Sigmoid colon (tissue), 7 donors: ENCODE measurements at regions of chr16 and their contacts with region 1.

Region 1: DNA sequence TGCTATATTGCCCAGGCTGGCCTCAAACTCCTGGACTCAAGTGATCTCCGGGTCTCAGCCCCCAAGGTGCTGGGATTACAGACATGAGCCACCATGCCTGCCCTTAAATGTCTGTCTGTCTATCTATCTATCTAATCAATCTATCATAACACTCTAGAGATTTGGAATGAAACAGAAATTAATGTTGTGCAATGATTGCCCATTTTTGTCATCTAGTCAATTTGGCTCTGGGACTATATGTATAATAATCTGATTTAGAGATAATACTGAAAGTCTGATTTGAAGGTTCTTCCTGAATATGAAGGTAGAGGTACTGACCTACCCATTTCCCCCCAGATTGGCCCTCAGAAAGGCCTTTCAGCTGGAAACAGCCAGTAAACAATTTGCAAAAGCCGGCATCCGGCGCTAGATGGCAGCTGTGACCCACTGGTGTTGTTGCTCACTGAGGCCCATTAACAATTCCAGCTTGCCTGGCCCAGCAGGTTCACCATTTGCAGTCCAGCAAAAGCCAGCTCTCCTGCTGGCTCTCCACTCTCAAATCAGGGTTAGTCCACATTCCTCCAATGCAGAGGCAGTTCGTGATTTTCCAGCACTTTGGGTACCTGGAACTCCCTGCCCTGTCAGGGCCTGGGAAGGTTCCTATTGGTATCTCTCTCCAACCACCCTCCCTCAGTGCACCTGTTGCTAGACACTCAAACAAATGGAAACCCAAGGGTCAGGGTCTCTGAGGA is 22.9 kb upstream of the C16orf87 start:
- DNase-seq: peak; percentile 83
- H3K4me3 ChIP-seq: no peak overlapping the region
- H3K27ac ChIP-seq: no peak overlapping the region
- H3K4me1 ChIP-seq: peaks cover 0 to 11% (median 11%) of the 10 kb centered on the region in 4 donors
- H3K27me3 ChIP-seq: no peaks in the 10 kb centered on the region
- CTCF ChIP-seq: peak; percentile 24 to 82 (median 64)
- EP300 ChIP-seq: no peak
- POLR2A ChIP-seq: no peak

Region 2: DNA sequence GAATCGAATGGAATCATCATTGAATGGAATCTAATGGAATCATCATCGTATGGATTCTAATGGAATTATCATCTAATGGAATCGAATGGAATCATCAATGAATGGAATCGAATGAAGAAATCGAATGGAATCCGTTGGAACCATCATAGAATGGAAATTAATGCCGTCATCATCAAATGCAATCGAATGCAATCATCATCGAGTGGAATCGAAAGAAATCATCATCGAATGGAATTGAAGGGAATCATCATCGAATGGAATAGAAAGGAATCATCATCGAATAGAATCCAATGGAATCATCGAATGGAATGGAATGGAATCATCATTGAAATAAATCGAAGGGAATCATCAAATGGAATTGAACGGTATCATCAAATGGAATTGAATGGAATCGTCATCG is 449.8 kb before region 1 on chr16:
- intact Hi-C with region 1: no loop called
- DNase-seq: no peak
- H3K4me3 ChIP-seq: no peak overlapping the region
- H3K27ac ChIP-seq: no peak overlapping the region
- H3K4me1 ChIP-seq: no peaks in the 10 kb centered on the region
- H3K27me3 ChIP-seq: no peaks in the 10 kb centered on the region
- CTCF ChIP-seq: no peak
- EP300 ChIP-seq: no peak
- POLR2A ChIP-seq: no peak

Region 3: GRCh38 chr16:46883690-46884512 is 30.0 kb after region 1 on chr16 and contains the start of gene GPT2:
- intact Hi-C with region 1: loop called (anchors 2 kb)
- DNase-seq: peak; percentile 97
- H3K4me3 ChIP-seq: peak within 1 kb of the TSS; percentile 54 to 87 (median 72)
- H3K27ac ChIP-seq: peak within 1 kb of the TSS; percentile 68 to 75 (median 70)
- H3K4me1 ChIP-seq: peaks cover 0 to 19% (median 15%) of the 10 kb centered on the region in 4 donors
- H3K27me3 ChIP-seq: peaks cover 0 to 12% (median 0%) of the 10 kb centered on the region in 3 donors
- CTCF ChIP-seq: no peak
- EP300 ChIP-seq: no peak
- POLR2A ChIP-seq: peak in 1 of 2 donors; percentile 14
- total RNA-seq, gene GPT2: 3.3 to 17.1 (median 10.7) TPM

Region 4: DNA sequence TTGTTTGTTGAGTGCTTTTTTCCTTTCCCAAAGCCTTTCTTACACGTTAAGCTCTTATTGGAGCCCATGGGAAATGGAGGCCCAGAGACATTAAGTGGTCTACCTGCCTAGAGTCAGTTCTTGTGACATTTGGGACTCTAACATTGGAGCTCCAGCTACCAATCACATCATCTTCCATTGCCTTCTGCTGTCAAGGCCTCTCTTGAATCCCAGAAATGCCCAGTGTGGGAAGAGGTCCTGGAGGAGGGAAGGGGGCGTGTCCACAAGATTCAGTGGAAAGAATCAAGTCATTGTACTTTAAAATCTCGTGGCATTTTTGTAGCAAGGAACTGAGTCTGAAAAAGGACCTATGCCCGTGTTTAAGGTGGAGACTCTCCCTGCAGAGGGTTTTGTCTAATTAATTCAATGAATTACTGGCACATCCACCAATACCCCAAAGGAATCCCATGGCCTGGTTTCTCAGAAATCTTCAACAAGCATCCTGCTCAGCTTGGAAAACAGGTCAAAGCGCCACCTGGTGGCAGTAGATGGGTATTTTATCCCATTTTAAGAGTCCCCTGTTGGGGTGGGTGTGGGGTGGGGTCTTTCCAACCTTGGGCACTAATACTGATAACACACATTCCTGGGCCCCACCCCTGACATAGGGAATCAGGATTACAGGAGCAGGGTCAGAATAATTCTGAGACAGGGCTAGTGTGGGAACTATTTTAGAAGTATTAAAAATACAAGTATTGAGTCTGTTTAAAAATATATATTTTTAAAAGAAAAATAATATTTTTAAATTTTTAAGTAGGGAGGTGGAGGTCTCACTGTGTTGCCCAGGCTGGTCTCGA is 54.9 kb after region 1 on chr16:
- intact Hi-C with region 1: loop called (anchors 1 kb)
- DNase-seq: no peak
- H3K4me3 ChIP-seq: no peak overlapping the region
- H3K27ac ChIP-seq: no peak overlapping the region
- H3K4me1 ChIP-seq: peaks cover 0 to 5% (median 0%) of the 10 kb centered on the region in 4 donors
- H3K27me3 ChIP-seq: no peaks in the 10 kb centered on the region
- CTCF ChIP-seq: peak in 3 of 4 experiments; percentile 69 to 85 (median 74)
- EP300 ChIP-seq: no peak
- POLR2A ChIP-seq: no peak

Region 5: GRCh38 chr16:46973207-46973995 is 119.5 kb after region 1 on chr16 and contains the start of gene DNAJA2:
- intact Hi-C with region 1: no loop called
- DNase-seq: peak; percentile 96
- H3K4me3 ChIP-seq: peak within 1 kb of the TSS; percentile 80 to 95 (median 90)
- H3K27ac ChIP-seq: peak within 1 kb of the TSS; percentile 95 to 99 (median 97)
- H3K4me1 ChIP-seq: peaks cover 0 to 40% (median 32%) of the 10 kb centered on the region in 4 donors
- H3K27me3 ChIP-seq: no peaks in the 10 kb centered on the region
- CTCF ChIP-seq: no peak
- EP300 ChIP-seq: peak in 1 of 4 donors; percentile 26
- POLR2A ChIP-seq: peak; percentile 85 to 86
- total RNA-seq, gene DNAJA2: 59.0 to 68.7 (median 60.7) TPM